ENCODE measurements at regions of chr17 and their contacts with region 1.

Region 1: DNA sequence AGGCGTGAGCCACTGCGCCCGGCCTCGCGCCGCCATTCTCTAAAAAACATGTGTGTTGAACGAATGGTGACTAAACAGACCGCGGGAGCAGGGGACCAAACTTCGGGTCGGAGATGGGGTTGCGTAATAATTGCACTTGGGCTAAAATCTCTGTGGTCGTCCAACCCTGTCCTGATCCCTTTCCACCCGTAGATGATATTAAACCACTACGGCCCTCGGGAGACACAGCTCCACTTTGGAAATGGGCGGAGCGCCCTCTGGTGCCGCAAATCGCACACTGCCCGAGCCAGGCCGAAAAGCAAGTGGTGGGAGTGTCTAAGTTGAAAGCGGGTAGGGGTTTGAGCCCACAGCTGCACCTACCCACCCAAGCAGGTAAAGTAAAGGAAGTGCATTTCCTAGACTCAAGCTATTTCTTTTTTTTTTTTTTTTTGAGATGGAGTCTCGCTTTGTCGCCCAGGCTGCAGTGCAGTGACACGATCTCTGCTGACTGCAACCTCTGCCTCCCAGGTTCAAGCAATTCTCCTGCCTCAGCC is 17.0 kb downstream of the CAVIN1 start:
- DNase-seq: peak; percentile 79
- H3K4me3 ChIP-seq: no peak overlapping the region
- H3K27ac ChIP-seq: no peak overlapping the region
- H3K4me1 ChIP-seq: peaks cover 15% of the 10 kb centered on the region
- CTCF ChIP-seq: peak; percentile 94

Region 2: GRCh38 chr17:42183741-42184711 is 222.0 kb before region 1 on chr17:
- CTCF ChIA-PET with region 1: no interaction called
- POLR2A ChIA-PET with region 1: no interaction called
- intact Hi-C with region 1: loop called (anchors 10 kb)
- DNase-seq: peak; percentile 79
- H3K4me3 ChIP-seq: peak overlapping the region; percentile 61
- H3K27ac ChIP-seq: no peak overlapping the region
- H3K4me1 ChIP-seq: peaks cover 27% of the 10 kb centered on the region
- CTCF ChIP-seq: peak; percentile 81

Region 3: DNA sequence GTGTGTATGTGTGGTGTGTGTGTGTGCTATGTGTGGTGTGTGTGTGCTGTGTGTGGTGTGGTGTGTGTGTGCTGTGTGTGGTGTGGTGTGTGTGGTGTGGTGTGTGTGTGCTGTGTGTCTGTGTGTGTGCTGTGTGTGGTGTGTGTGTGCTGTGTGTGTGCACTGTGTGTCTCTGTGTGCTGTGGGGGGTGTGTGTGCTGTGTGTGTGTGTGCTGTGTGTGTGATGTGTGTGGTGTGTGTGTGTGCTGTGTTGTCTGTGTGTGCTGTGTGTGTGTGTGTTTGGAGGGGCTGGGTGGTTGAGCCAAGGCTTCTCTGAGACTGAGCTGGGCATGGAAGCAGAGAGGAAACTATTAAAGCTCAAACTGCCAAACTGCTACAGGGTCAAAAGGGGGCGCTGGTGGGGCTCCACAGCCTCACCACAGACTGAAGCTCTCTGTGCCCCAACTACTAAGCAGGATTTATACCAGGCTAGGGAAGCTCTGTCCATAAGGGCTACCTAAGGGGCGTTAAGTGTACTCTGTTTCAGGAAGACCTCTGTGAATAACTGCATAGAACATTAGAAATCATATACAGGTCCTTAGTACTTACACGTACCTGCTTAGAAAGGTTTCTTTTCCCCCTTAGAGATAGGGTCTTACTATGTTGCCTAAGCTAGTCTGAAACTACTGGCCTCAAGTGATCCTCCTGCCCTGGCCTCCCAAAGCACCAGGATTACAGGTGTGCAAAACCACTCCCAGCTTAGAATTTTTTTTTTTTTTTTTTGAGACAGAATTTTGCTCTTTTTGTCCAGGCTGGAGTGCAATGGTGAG is 183.9 kb before region 1 on chr17:
- CTCF ChIA-PET with region 1: no interaction called
- POLR2A ChIA-PET with region 1: no interaction called
- intact Hi-C with region 1: loop called (anchors 10 kb)
- DNase-seq: peak; percentile 66
- H3K4me3 ChIP-seq: no peak overlapping the region
- H3K27ac ChIP-seq: no peak overlapping the region
- H3K4me1 ChIP-seq: no peaks in the 10 kb centered on the region
- CTCF ChIP-seq: peak; percentile 87

Region 4: DNA sequence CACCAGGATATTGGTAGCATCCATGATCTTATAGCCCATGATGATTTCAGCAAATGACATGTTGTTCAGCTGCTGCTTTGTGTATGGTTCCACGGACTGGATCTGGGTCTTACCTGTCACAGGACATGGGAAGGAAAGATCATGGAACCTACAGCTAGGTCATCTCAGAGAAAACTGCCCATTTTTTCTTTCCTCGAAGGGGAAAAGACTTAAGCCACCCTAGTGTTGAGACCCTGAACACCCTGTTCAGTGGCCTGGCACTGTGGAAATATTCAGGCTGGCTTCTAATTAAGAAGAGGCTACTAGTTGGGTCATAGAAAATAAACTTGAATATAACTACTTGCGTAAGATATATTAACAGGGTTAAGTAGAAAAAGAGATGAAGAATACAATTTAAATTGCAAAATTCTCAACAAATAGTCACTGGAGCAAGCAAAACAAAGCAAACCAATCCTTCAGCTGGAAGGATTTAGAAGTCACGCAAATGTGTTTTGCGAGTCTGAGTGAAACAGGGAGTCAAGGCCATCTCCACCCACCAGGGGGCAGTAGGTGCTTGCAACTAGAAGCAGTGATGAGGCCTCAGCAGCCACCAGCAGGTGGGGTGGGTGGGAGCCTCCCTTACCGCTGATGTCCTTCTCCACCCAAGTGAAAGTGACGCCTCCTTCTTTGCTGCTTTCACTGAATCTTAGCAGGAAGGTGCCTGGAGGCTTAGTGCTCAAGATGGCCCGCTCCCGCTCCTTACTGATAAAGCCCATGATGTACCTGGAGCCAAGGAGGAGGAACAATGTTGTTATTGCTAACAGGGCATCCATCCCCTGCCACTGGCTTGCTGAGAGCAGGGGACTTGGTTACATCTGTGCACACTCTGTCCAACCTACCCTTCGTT is 83.4 kb before region 1 on chr17:
- CTCF ChIA-PET with region 1: interaction called, 8 read pairs
- POLR2A ChIA-PET with region 1: no interaction called
- intact Hi-C with region 1: loop called (anchors 1 kb)
- DNase-seq: peak; percentile 93
- H3K4me3 ChIP-seq: no peak overlapping the region
- H3K27ac ChIP-seq: no peak overlapping the region
- H3K4me1 ChIP-seq: peaks cover 14% of the 10 kb centered on the region
- CTCF ChIP-seq: peak; percentile 100

Region 5: DNA sequence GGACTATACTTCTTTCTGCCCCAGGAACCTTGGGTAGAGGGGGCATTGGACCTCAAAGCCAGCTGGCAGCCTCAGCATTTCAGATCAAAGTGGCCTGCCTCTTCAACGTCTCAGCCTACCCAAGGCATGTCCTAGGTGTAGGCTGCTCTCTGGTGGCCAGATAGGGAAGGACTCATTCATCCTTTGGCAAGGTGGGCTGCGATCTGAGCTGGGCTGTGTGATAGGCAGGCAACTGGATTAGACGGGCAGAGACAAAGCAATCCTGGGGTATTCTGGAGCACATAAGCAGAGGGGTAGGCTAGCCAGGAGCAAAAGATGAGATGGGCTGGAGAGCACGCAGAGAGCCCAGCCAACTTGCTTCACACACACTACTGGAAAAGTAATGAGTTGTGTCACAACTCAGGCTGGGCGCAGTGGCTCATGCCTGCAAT is 121.3 kb after region 1 on chr17:
- CTCF ChIA-PET with region 1: interaction called, 5 read pairs
- POLR2A ChIA-PET with region 1: interaction called, 8 read pairs
- intact Hi-C with region 1: loop called (anchors 1 kb)
- DNase-seq: peak; percentile 87
- H3K4me3 ChIP-seq: no peak overlapping the region
- H3K27ac ChIP-seq: no peak overlapping the region
- H3K4me1 ChIP-seq: peaks cover 19% of the 10 kb centered on the region
- CTCF ChIP-seq: peak; percentile 89

Region 6: GRCh38 chr17:42725143-42725542 is 319.1 kb after region 1 on chr17:
- CTCF ChIA-PET with region 1: no interaction called
- POLR2A ChIA-PET with region 1: no interaction called
- intact Hi-C with region 1: no loop called
- DNase-seq: no peak
- H3K4me3 ChIP-seq: no peak overlapping the region
- H3K27ac ChIP-seq: no peak overlapping the region
- H3K4me1 ChIP-seq: no peaks in the 10 kb centered on the region
- CTCF ChIP-seq: no peak